Tibial artery (tissue), 4 donors: ENCODE measurements at regions of chr6 and their contacts with region 1.

Region 1: DNA sequence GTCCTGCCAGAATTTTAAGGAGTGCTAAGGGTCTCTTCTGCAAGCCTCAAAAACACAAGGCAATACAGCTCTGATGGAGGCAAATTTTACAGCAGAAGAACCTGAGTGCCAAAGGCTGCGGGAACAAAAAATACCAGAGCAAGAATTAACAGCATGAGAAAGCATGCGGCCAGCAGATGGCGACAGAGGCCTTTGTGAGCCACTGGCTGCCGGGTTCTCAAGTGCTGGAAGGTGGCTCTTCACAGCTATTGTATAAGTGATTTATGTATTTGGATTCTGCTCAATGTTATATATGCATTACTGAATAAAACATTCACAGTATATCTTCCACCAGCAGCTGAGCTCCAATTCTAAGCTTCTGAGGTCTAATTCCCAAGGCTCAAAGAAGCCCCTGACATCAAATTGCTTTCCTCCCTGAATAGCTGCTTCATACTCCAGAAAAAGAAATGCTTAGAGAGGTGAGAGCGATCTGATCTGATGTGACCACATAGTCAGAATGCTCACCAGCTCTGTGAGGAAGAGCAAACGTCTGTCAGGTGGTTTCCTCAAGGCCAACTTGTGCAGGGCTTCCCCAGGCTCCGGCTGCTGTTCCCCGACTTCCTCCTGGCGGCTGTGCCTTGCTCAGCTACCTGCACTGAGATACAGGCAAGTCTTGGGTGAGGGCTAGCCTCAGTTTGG is 58.6 kb downstream of the PPP1R3G start:
- DNase-seq: peak; percentile 86 to 89
- H3K4me3 ChIP-seq: no peak overlapping the region
- H3K27ac ChIP-seq: no peak overlapping the region
- H3K4me1 ChIP-seq: no peaks in the 10 kb centered on the region
- H3K27me3 ChIP-seq: no peaks in the 10 kb centered on the region
- CTCF ChIP-seq: peak; percentile 87 to 92

Region 2: DNA sequence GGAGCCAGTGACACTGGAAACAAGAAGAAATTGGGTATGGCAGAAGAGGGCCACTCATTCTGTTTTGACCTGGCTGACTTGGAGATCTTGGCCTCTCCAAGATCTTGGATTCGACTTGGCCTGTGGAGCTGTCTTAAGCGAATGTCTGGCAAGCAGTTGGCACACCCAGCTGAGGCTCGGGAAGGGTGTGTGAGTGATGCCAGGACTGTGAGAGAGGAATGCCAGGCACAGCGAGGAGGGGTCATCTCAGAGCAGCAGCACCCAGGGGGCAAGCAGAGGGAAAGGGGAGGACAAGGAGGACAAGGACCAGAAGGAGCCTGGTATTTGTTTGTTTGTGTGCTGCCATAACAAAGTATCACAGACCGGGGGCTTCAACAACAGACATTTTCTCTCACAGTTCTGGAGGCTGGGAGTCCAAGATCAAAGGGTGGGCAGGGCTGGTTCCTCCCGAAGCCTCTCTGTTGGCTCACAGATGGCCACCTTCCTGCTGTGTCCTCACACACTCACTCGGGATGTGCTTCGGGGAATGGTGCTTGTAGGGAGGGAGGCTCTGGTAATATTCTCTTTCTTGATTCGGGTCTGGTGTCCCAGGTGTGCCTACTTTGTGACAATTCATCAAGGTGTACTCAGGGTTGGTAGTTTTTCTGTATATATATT is 172.9 kb before region 1 on chr6:
- intact Hi-C with region 1: no loop called
- DNase-seq: no peak
- H3K4me3 ChIP-seq: no peak overlapping the region
- H3K27ac ChIP-seq: no peak overlapping the region
- H3K4me1 ChIP-seq: peaks cover 0 to 22% (median 15%) of the 10 kb centered on the region in 4 donors
- H3K27me3 ChIP-seq: no peaks in the 10 kb centered on the region
- CTCF ChIP-seq: no peak

Region 3: GRCh38 chr6:5078121-5078669 is 65.6 kb before region 1 on chr6:
- intact Hi-C with region 1: no loop called
- DNase-seq: no peak
- H3K4me3 ChIP-seq: no peak overlapping the region
- H3K27ac ChIP-seq: no peak overlapping the region
- H3K4me1 ChIP-seq: no peaks in the 10 kb centered on the region
- H3K27me3 ChIP-seq: no peaks in the 10 kb centered on the region
- CTCF ChIP-seq: no peak

Region 4: GRCh38 chr6:5214570-5215052 is 70.8 kb after region 1 on chr6:
- intact Hi-C with region 1: loop called (anchors 10 kb)
- DNase-seq: peak in 1 of 2 donors; percentile 79
- H3K4me3 ChIP-seq: no peak overlapping the region
- H3K27ac ChIP-seq: peak overlapping the region in 1 of 2 donors; percentile 14
- H3K4me1 ChIP-seq: peaks cover 0 to 51% (median 20%) of the 10 kb centered on the region in 4 donors
- H3K27me3 ChIP-seq: no peaks in the 10 kb centered on the region
- CTCF ChIP-seq: peak; percentile 72 to 83